ENCODE measurements at regions of chr12 and their contacts with region 1.

Region 1: DNA sequence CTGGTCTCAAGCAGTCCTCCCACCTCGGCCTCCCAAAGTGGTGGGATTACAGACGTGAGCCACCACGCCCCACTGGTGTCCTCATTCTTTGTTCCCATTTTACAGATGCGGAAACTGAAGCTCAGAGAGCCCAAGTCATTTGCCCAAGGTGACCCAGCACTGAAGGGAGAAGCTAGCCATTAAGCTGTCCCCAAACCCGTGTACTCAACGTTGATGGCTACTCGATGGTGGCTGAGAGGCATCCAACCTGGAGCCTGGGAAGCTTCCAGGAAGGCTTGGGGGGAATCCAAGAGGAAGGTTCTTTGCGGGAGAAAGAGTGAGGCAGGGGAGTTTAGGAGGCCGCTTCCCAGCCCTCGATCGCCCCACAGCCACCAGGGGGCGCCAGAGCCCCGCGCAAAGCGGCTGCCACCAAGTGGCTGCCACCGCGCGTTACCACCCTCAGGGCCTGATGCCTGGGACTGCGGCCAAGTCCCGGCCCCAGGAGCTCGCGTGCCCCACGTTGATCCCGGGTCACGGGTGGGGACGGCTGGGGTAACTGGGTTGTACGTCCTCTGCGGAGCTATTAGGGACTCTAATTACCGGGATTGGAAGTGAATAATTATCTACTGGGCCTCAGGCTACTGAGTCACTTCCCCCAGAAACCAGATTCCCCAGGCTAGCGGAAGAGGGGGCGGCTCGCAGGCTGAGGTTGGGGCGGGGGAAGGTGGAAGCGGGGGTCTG is 8.8 kb upstream of the SH2B3 start:
- DNase-seq: peak; percentile 49
- H3K4me3 ChIP-seq: peak overlapping the region; percentile 2; the same call in 1 of the 2 replicates
- H3K27me3 ChIP-seq: no peaks in the 10 kb centered on the region
- CTCF ChIP-seq: peak; percentile 99

Region 2: GRCh38 chr12:111368788-111369495 is 27.9 kb before region 1 on chr12 and contains the start of gene PHETA1:
- CTCF ChIA-PET with region 1: interaction called, 17 read pairs
- POLR2A ChIA-PET with region 1: no interaction called
- DNase-seq: peak; percentile 51
- H3K4me3 ChIP-seq: peak within 1 kb of the TSS; percentile 89
- H3K27me3 ChIP-seq: no peaks in the 10 kb centered on the region
- CTCF ChIP-seq: no peak
- polyA plus RNA-seq, gene PHETA1: 2.6 and 5.3 TPM in 2 replicates

Region 3: DNA sequence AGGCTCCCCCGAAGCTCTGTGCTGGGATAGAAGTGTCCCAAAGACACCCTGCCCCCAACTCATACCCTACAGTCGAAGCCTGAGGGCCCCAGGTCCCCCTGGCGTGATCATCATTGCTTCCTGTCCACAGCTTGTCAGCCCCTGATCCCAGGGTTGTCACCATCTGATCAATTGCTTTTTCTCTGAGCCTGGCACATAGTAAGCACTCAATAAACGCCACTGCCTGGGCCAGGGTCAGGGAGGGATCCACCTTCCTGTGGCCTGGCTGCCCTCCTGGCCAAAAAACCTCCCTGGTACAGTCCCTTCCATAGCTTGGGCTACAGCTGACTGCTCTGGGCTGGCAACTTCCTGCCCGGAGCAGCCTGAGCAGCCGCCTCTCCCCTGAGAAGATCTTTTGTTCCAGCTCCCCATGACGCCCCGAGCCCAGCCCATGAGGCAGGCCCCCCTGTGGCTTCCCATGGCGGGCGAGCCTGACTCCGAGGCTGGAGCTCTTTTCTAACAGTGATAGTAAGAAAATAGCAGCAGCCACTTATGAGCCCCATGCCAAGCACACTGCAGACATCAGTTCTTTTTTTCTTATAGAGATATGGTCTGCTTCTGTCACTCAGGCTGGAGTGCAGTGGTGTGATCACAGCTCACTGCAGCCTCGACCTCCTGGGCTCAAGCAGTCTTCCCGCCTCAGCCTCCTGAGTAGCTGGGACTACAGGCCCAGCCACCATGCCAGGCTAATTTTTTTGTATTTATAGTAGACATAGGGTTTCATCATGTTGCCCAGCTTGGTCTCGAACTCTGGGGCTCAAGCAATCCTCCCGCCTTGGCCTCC is 15.3 kb after region 1 on chr12:
- CTCF ChIA-PET with region 1: interaction called, 40 read pairs
- POLR2A ChIA-PET with region 1: no interaction called
- DNase-seq: no peak
- H3K4me3 ChIP-seq: no peak overlapping the region
- H3K27me3 ChIP-seq: no peaks in the 10 kb centered on the region
- CTCF ChIP-seq: no peak

Region 4: GRCh38 chr12:111462210-111462769 is 65.4 kb after region 1 on chr12:
- CTCF ChIA-PET with region 1: interaction called, 86 read pairs
- POLR2A ChIA-PET with region 1: interaction called, 12 read pairs
- DNase-seq: peak; percentile 89
- H3K4me3 ChIP-seq: no peak overlapping the region
- H3K27me3 ChIP-seq: no peaks in the 10 kb centered on the region
- CTCF ChIP-seq: no peak

Region 5: DNA sequence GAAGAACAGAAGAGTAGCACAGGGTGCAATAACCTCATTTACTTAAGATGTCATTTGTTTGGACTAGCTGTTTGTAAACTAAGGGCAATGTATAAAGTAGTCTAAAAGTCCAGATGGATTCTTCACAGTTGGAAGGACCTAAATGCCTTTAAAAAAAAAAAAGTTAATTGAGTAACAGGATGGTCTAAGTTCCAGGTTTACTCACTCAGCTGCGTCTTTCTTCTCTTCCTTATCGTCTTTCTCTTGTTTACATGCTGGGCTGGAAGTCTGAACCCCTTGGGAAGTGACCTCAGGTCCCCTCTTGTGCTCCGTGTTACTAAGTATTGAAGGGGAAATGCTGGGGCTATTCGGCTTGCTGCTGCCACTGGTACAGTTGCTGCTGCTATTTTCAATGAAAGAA is 91.4 kb after region 1 on chr12:
- CTCF ChIA-PET with region 1: interaction called, 22 read pairs
- POLR2A ChIA-PET with region 1: no interaction called
- DNase-seq: no peak
- H3K4me3 ChIP-seq: no peak overlapping the region
- H3K27me3 ChIP-seq: no peaks in the 10 kb centered on the region
- CTCF ChIP-seq: no peak

Region 6: DNA sequence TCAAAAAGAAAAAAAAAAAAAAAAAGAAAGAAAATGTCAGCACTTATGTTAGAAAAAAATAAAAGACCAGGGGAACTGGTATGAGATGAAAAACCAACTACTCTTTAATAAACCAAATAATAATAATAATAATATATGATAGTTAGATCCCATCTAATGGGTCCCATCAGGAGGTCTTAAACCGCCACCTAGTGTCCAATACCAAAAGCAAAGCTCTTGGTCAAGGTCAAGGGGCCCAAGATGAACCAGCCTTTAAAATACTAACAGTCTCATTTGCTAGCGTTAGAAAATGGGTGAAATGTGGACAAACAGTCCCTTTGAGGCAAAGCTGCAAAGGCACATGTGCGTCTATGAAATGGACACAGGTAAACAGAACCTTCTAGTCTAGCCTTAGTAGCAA is 276.6 kb after region 1 on chr12:
- CTCF ChIA-PET with region 1: interaction called, 38 read pairs
- POLR2A ChIA-PET with region 1: no interaction called
- DNase-seq: no peak
- H3K4me3 ChIP-seq: no peak overlapping the region
- H3K27me3 ChIP-seq: no peaks in the 10 kb centered on the region
- CTCF ChIP-seq: peak; percentile 65

Measured in BJ (cell line).